ENCODE measurements at regions of chr6 and their contacts with region 1.

Region 1: GRCh38 chr6:26196846-26197648 is 109.8 kb downstream of the HFE start:
- DNase-seq: peak; percentile 84
- H3K4me3 Mint-ChIP-seq: peak overlapping the region; percentile 86
- H3K27ac Mint-ChIP-seq: peak overlapping the region; percentile 99
- H3K4me1 Mint-ChIP-seq: peaks cover 31% of the 10 kb centered on the region
- H3K27me3 Mint-ChIP-seq: peaks cover 3% of the 10 kb centered on the region

Region 2: GRCh38 chr6:26031595-26032339 is 165.3 kb before region 1 on chr6:
- CTCF ChIA-PET with region 1: interaction called, 5 read pairs
- POLR2A ChIA-PET with region 1: interaction called, 16 read pairs
- intact Hi-C with region 1: loop called (anchors 5 kb)
- DNase-seq: peak; percentile 93
- H3K4me3 Mint-ChIP-seq: peak overlapping the region; percentile 83
- H3K27ac Mint-ChIP-seq: peak overlapping the region; percentile 99
- H3K4me1 Mint-ChIP-seq: peaks cover 49% of the 10 kb centered on the region
- H3K27me3 Mint-ChIP-seq: peaks cover 17% of the 10 kb centered on the region

Region 3: DNA sequence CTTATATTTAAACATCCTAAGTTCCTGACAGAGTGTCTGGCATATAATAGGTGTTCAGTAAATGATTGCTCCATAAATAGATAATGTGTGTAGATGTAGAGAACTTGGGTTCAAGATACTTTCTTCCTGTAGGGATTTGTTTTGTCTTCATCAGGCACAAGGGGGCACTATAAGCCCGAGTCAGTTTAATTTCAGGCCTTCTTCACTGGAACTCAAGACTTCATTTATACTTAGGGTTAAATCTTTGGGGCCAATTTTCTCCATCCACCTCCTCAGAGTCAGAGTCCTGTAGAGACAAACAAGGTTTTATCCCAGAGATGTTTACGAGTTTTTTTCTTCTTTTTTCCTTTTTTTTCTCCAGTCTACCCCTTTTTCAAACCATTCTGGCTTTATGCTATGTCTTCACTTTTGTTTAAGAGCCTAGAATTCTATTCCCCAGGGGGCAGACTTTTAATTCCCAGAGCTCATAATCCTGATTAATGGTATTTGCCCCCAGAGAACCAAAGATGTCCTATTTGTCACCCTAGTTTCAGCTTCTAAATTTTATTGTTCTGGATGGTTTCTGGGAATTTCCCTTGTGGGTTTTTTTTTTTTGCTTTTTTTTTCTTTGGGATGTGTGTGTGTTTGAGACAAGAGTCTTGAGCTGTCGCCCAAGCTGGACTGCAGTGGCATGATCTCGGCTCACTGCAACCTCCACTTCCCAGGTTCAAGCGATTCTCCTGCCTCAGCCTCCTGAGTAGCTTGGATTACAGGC is 21.4 kb before region 1 on chr6:
- CTCF ChIA-PET with region 1: interaction called, 10 read pairs
- POLR2A ChIA-PET with region 1: interaction called, 109 read pairs
- intact Hi-C with region 1: loop called (anchors 2 kb)
- DNase-seq: peak; percentile 63
- H3K4me3 Mint-ChIP-seq: peak overlapping the region; percentile 24
- H3K27ac Mint-ChIP-seq: peak overlapping the region; percentile 43
- H3K4me1 Mint-ChIP-seq: peaks cover 31% of the 10 kb centered on the region
- H3K27me3 Mint-ChIP-seq: no peaks in the 10 kb centered on the region

Region 4: GRCh38 chr6:26183581-26184366 is 13.3 kb before region 1 on chr6:
- CTCF ChIA-PET with region 1: interaction called, 13 read pairs
- POLR2A ChIA-PET with region 1: interaction called, 258 read pairs
- intact Hi-C with region 1: loop called (anchors 1 kb)
- DNase-seq: peak; percentile 80
- H3K4me3 Mint-ChIP-seq: peak overlapping the region; percentile 85
- H3K27ac Mint-ChIP-seq: peak overlapping the region; percentile 95
- H3K4me1 Mint-ChIP-seq: peaks cover 37% of the 10 kb centered on the region
- H3K27me3 Mint-ChIP-seq: peaks cover under 1% of the 10 kb centered on the region

Region 5: DNA sequence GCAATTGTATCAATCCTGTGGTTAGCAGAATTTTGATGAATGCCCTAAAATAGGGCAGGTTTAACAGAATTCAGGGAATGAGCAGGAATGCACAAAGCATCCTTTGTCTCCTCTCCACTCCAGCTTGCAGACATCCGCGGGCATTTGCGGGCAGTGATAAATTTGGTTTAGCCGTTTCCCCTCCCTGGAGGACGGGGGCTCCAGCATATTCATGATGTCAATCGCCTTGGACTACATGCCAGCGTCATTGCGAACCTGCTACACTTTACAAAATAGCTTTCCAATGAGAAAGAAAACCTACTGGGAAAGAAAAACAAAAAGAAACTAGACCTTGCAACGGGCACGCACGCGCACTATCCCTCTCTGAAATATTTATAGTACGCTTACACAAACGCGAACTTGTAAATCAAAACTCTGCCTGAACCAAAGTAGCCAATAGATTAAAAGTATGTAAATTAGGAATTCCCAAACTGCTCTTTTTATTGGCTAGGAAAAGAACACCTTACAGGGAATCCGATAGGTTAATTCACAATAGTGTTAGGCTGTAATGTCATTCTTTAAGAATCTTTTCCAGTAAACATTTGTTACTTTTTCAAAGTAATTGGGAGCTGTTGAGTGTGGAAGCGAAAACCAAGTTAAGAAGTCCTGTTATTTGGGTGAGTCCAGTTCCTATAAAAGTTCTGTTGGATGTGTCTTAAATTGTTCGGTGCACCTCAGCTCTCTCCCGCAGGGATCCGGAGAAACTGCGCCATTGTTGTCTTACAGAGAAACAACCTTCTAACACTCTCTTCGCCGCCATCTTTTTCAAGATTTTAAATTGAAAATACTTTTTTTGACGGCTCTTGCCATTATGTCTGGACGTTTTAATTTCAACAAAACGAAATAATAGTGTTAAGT is 26.9 kb after region 1 on chr6:
- CTCF ChIA-PET with region 1: interaction called, 3 read pairs
- POLR2A ChIA-PET with region 1: interaction called, 45 read pairs
- intact Hi-C with region 1: no loop called
- DNase-seq: peak; percentile 77
- H3K4me3 Mint-ChIP-seq: no peak overlapping the region
- H3K27ac Mint-ChIP-seq: no peak overlapping the region
- H3K4me1 Mint-ChIP-seq: peaks cover 13% of the 10 kb centered on the region
- H3K27me3 Mint-ChIP-seq: no peaks in the 10 kb centered on the region

Region 6: DNA sequence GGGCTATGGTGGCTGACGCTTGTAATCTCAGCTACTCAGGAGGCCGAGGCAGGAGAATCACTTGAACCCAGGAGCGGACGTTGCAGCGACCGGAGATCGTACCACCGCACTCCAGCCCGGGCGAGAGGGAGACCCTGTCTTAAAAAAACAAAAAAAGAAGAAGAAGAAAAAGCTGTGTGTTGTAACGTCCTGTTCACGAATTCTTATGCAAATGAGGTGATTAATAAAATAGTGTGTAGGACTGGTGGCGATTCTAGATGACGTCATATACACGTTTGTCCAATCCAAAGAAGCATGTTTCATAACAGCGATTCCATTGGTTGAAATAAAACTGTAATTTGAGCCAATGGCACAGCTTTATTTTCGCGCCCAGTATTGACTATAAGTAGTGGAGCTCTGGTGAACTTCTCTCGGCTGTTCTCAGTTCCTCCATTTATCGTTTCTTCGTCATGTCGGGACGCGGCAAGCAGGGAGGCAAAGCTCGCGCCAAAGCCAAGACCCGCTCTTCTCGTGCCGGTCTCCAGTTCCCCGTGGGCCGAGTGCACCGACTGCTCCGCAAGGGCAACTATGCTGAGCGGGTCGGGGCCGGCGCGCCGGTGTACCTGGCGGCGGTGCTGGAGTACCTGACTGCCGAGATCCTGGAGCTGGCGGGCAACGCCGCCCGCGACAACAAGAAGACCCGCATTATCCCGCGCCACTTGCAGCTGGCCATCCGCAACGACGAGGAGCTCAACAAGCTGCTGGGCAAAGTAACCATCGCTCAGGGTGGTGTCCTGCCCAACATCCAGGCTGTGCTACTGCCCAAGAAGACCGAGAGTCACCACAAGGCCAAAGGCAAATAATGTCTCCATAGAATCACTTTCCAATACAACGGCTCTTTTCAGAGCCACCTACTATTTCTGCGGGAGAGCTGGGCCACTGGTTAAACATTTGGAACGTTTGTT is 1668.1 kb after region 1 on chr6:
- CTCF ChIA-PET with region 1: no interaction called
- POLR2A ChIA-PET with region 1: interaction called, 4 read pairs
- intact Hi-C with region 1: loop called (anchors 5 kb)
- DNase-seq: peak; percentile 85
- H3K4me3 Mint-ChIP-seq: peak overlapping the region; percentile 96
- H3K27ac Mint-ChIP-seq: peak overlapping the region; percentile 100
- H3K4me1 Mint-ChIP-seq: peaks cover 38% of the 10 kb centered on the region
- H3K27me3 Mint-ChIP-seq: peaks cover 20% of the 10 kb centered on the region

Measured in activated CD4-positive, alpha-beta memory T cell treated with anti-CD3 and anti-CD28 coated beads for 36 hours (primary cell).